ENCODE measurements at regions of chr12 and their contacts with region 1.

Region 1: DNA sequence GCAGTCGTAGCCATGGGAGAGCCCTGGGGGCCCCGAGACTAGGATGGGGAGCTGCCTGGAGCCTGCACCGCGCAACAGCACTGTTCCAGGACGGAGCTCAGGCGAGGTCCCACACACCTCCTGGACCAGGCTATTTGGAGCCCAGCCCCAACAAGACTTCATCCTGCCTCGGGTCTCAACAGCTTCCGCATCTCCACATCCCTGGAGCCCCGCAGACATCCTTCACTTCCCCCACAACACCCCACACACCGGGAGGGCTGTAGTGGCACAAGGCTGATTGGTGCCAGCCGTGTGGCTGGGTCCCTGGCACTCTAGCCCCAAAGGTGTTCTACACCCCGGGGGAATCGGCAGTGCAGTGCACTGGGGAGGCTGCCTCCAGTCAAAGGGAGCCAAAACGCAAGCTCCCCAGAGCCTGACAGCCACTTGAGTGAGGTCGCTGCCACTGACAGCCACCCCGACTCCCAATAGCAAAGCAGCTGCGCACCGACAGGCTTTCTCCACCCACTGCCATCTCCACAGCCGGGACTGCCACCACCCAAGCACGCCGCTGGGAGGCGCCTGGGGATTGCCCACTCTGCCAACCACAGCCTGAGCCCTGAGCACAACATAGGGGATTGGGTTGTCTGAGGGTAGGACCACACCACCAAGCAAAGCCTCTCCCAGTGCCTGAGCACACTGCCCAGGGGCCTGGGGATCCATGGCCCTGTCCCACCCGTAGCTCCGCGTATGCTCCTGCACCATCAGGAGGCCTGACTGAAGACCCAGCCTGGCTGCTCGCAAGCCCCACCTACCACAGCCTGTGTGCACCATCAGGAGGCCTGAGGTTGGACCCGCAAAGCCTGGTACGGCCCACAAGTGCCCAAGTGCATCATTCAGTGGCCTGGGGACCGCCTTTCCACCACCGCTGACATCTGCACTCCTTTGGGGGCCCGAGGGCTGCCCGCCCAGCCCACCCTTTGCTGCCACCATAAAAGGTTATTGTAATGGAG is 13.2 kb upstream of the KLRF1 start:
- DNase-seq: peak; percentile 85 to 98 (median 92)
- ATAC-seq: peak; percentile 98
- H3K4me3 ChIP-seq: peak overlapping the region; percentile 65 to 66
- H3K4me3 Mint-ChIP-seq: peak overlapping the region; percentile 87
- H3K27ac ChIP-seq: peak overlapping the region; percentile 38 to 59
- H3K27ac Mint-ChIP-seq: peak overlapping the region; percentile 88
- H3K4me1 ChIP-seq: peaks cover 7% of the 10 kb centered on the region
- H3K4me1 Mint-ChIP-seq: peaks cover 13% of the 10 kb centered on the region
- H3K27me3 ChIP-seq: no peaks in the 10 kb centered on the region
- H3K27me3 Mint-ChIP-seq: peaks cover 4% of the 10 kb centered on the region
- CTCF ChIP-seq: peak; percentile 82

Region 2: DNA sequence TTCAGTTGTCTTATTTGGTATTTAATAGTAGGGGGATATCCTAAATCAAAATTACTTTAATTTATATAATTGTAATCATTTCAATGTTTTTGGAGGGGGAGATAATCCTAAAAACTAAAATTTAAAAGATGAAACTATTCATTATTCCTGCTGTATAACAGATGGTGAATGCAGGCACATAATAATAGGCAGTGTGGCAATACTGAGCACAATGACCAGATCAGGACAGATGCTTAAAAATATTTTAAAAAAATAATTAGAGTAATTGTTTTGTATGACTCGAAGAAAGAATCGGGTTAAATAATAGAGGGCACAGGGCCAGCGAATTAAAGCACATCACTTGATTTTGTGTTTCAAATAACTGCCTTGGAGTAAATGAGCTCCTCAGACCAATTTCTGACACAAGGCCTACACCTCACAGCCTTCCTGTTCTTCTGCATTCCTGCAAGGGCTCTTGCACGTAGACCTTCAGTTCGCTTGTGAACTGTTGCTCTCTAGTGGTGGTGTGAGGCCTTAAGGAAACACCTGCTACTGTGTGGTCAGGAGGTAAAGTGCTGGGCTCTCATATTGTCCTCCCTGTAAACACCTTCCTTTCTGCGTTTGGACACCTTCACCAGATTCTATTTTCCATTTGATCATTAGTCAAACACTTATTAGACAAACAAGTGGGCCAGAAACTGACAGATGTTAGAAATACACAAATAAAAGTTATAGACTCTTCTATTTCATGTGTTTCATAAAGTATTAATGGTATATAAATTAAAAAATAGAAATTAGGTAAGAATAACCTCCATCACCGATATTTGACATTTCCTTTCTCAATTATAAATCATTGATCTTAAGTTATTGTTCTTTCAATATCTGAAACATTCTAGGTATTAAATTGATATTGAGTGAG is 16.1 kb before region 1 on chr12:
- CTCF ChIA-PET with region 1: interaction called, 42 read pairs
- POLR2A ChIA-PET with region 1: interaction called, 3 read pairs
- intact Hi-C with region 1: no loop called
- DNase-seq: peak; percentile 37 to 91 (median 67)
- ATAC-seq: peak; percentile 95
- H3K4me3 ChIP-seq: no peak overlapping the region
- H3K4me3 Mint-ChIP-seq: no peak overlapping the region
- H3K27ac ChIP-seq: no peak overlapping the region
- H3K27ac Mint-ChIP-seq: peak overlapping the region; percentile 46
- H3K4me1 ChIP-seq: peaks cover 49% of the 10 kb centered on the region
- H3K4me1 Mint-ChIP-seq: peaks cover 45% of the 10 kb centered on the region
- H3K27me3 ChIP-seq: no peaks in the 10 kb centered on the region
- H3K27me3 Mint-ChIP-seq: no peaks in the 10 kb centered on the region
- CTCF ChIP-seq: peak; percentile 86

Region 3: DNA sequence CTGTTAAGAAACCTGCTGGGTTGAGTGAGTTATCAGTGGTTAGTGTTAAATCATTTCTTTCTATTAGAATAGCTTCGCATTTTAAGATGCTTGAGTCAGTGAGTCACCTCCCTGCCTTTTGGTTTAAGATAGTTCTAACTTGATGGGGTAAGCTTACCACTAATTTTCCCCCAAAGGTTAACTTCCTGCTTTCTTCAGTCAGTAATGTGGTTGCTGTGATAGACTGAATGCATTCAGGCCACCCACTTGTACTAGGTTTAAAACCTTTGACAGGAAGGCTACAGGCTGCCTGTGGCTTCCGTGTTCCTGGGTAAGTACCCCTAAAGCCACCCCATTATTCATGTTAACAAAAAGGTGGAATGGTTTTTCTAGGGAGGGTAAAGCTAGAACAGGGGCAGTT is 92.8 kb after region 1 on chr12:
- CTCF ChIA-PET with region 1: interaction called, 30 read pairs
- POLR2A ChIA-PET with region 1: interaction called, 7 read pairs
- intact Hi-C with region 1: loop called in 1 of 2 experiments (anchors 1 kb)
- DNase-seq: peak in 8 of 9 experiments; percentile 15 to 86 (median 59)
- ATAC-seq: peak; percentile 96
- H3K4me3 ChIP-seq: peak overlapping the region in 1 of 2 experiments; percentile 8
- H3K4me3 Mint-ChIP-seq: peak overlapping the region; percentile 49
- H3K27ac ChIP-seq: peak overlapping the region in 1 of 2 experiments; percentile 3
- H3K27ac Mint-ChIP-seq: peak overlapping the region; percentile 82
- H3K4me1 ChIP-seq: peaks cover 28% of the 10 kb centered on the region
- H3K4me1 Mint-ChIP-seq: peaks cover 36% of the 10 kb centered on the region
- H3K27me3 ChIP-seq: no peaks in the 10 kb centered on the region
- H3K27me3 Mint-ChIP-seq: no peaks in the 10 kb centered on the region
- CTCF ChIP-seq: no peak

Region 4: GRCh38 chr12:9940375-9940774 is 126.3 kb after region 1 on chr12:
- CTCF ChIA-PET with region 1: interaction called, 10 read pairs
- POLR2A ChIA-PET with region 1: no interaction called
- intact Hi-C with region 1: no loop called
- DNase-seq: peak in 2 of 9 experiments; percentile 33 to 55
- ATAC-seq: no peak
- H3K4me3 ChIP-seq: no peak overlapping the region
- H3K4me3 Mint-ChIP-seq: no peak overlapping the region
- H3K27ac ChIP-seq: no peak overlapping the region
- H3K27ac Mint-ChIP-seq: no peak overlapping the region
- H3K4me1 ChIP-seq: no peaks in the 10 kb centered on the region
- H3K4me1 Mint-ChIP-seq: peaks cover 10% of the 10 kb centered on the region
- H3K27me3 ChIP-seq: no peaks in the 10 kb centered on the region
- H3K27me3 Mint-ChIP-seq: no peaks in the 10 kb centered on the region
- CTCF ChIP-seq: peak; percentile 41

Region 5: GRCh38 chr12:10190558-10191388 is 376.7 kb after region 1 on chr12:
- CTCF ChIA-PET with region 1: interaction called, 6 read pairs
- POLR2A ChIA-PET with region 1: no interaction called
- intact Hi-C with region 1: loop called (anchors 1 to 5 kb)
- DNase-seq: peak in 8 of 9 experiments; percentile 30 to 77 (median 58)
- ATAC-seq: peak; percentile 99
- H3K4me3 ChIP-seq: no peak overlapping the region
- H3K4me3 Mint-ChIP-seq: no peak overlapping the region
- H3K27ac ChIP-seq: no peak overlapping the region
- H3K27ac Mint-ChIP-seq: no peak overlapping the region
- H3K4me1 ChIP-seq: no peaks in the 10 kb centered on the region
- H3K4me1 Mint-ChIP-seq: peaks cover 6% of the 10 kb centered on the region
- H3K27me3 ChIP-seq: peaks cover 0 to 5% of the 10 kb centered on the region in 2 experiments
- H3K27me3 Mint-ChIP-seq: peaks cover 12% of the 10 kb centered on the region
- CTCF ChIP-seq: peak; percentile 83

Region 6: GRCh38 chr12:10968765-10969456 is 1154.8 kb after region 1 on chr12:
- CTCF ChIA-PET with region 1: no interaction called
- POLR2A ChIA-PET with region 1: no interaction called
- intact Hi-C with region 1: no loop called
- DNase-seq: no peak
- ATAC-seq: no peak
- H3K4me3 ChIP-seq: no peak overlapping the region
- H3K4me3 Mint-ChIP-seq: no peak overlapping the region
- H3K27ac ChIP-seq: no peak overlapping the region
- H3K27ac Mint-ChIP-seq: no peak overlapping the region
- H3K4me1 ChIP-seq: no peaks in the 10 kb centered on the region
- H3K4me1 Mint-ChIP-seq: peaks cover 1% of the 10 kb centered on the region
- H3K27me3 ChIP-seq: no peaks in the 10 kb centered on the region
- H3K27me3 Mint-ChIP-seq: no peaks in the 10 kb centered on the region
- CTCF ChIP-seq: no peak